ENCODE measurements at regions of chr16 and their contacts with region 1.

Region 1: GRCh38 chr16:89217388-89218191 is at the start of gene ZNF778:
- DNase-seq: peak; percentile 70 to 90 (median 82)
- H3K4me3 ChIP-seq: peak within 1 kb of the TSS; percentile 60 to 100 (median 93)
- H3K27ac ChIP-seq: peak within 1 kb of the TSS; percentile 41 to 98 (median 92)
- H3K27me3 ChIP-seq: no peaks in the 10 kb centered on the region
- CTCF ChIP-seq: peak in 32 of 56 donors; percentile 10 to 51 (median 29)
- total RNA-seq, gene ZNF778: 10.1 to 35.3 (median 17.7) TPM

Region 2: GRCh38 chr16:88856828-88857733 is 360.5 kb before region 1 on chr16 and contains the starts of genes GALNS and TRAPPC2L:
- intact Hi-C with region 1: loop called in 1 of 2 experiments (anchors 5 kb)
- DNase-seq: peak; percentile 98 to 100 (median 99)
- H3K4me3 ChIP-seq: peak within 1 kb of the TSS; percentile 66 to 100 (median 97)
- H3K27ac ChIP-seq: peak within 1 kb of the TSS; percentile 85 to 100 (median 97)
- H3K27me3 ChIP-seq: no peaks in the 10 kb centered on the region
- CTCF ChIP-seq: peak in 8 of 56 donors; percentile 6 to 30 (median 10)
- total RNA-seq, gene GALNS: 22.5 to 60.1 (median 36.3) TPM
- total RNA-seq, gene TRAPPC2L: 30.9 to 83.9 (median 57.9) TPM

Region 3: DNA sequence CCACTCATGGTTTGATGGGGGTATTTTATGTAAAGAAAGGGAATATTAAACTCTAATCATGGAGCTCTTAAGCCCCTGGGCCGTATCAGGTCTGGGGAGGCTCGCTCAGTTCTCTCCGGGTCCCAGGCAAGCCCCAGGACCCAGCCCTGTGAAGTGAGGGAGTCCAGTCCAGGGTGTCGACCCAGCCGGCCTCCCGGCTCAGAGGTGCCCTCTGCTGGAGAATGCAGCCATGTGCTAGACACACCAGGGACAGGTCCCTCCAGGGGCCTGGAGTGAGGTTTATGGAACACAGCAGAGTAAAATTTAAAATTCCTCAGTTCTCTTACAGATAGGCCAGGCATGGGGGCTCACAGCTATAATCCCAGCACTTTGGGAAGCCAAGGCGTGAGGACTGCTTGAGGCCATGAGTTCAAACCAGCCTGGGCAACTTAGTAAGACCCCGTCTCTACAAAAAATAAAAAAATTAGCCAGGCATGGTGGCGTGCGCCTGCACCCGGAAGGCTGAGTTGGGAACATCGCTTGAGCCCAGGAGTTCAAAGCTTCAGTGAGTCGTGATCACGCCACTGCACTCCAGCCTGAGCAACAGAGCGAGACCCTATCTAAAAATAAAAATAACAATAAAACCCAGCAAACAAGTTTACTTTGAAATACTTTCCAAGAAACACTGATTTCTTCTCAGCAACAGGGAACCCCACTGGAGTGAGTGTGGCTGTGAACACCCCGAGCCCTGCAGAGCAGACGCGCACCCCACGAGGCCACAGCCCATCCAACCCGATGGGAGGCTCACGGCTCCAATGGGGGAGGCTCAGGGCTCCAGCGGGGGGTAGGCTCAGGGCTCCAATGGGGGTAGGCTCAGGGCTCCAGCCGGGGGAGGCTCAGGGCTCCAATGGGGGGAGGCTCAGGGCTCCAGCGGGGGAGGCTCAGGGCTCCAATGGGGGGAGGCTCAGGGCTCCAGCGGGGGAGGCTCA is 72.1 kb after region 1 on chr16:
- intact Hi-C with region 1: no loop called
- DNase-seq: peak in 9 of 10 donors; percentile 63 to 81 (median 71)
- H3K4me3 ChIP-seq: no peak overlapping the region
- H3K27ac ChIP-seq: peak overlapping the region in 9 of 59 donors; percentile 1 to 46 (median 12)
- H3K27me3 ChIP-seq: no peaks in the 10 kb centered on the region
- CTCF ChIP-seq: peak; percentile 42 to 91 (median 78)

Region 4: GRCh38 chr16:89383082-89384003 is 165.8 kb after region 1 on chr16:
- intact Hi-C with region 1: no loop called
- DNase-seq: no peak
- H3K4me3 ChIP-seq: no peak overlapping the region
- H3K27ac ChIP-seq: no peak overlapping the region
- H3K27me3 ChIP-seq: no peaks in the 10 kb centered on the region
- CTCF ChIP-seq: no peak